Dendritic cell treated with granulocyte-macrophage colony-stimulating factor and Interleukin-4, amounts not matched to agents 40 ng/mL and 50 ng/mL, for 4 days (primary cell): ENCODE measurements at regions of chr16 and their contacts with region 1.

Region 1: DNA sequence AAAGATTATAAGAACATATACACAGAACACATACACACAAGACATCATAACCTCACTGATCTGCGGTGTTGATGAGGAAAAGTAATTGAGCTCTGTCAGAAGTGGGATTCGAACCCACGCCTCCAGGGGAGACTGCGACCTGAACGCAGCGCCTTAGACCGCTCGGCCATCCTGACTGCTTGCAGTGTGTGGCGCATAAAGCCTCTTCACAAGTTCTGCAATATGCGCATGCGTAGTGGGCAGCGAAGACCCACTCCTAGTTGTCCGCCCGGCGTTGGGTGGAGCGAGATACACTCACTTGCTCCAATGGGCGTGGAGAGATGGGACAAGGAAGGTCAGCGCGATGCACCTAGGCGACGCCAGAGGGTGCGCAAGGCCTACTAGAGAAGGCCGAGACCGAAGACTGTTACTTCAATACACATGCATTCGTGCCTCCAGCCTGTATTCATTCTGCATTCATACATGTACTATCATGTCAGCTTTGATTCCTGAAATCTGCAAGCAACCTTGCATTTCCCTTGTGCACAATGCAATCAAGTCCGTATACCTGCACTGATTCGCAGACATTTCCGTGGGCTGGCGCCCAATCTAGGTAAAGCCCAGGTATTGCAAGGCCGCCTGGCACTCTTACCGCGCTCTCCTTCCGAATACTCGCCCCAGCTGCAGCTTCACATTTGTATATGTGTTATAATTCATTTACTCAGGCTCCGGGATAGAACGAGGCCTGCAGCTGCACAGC is 16.1 kb upstream of the PLLP start:
- H3K4me3 Mint-ChIP-seq: peak overlapping the region; percentile 0
- H3K27ac Mint-ChIP-seq: no peak overlapping the region
- H3K4me1 Mint-ChIP-seq: peaks cover 14% of the 10 kb centered on the region
- H3K27me3 Mint-ChIP-seq: peaks cover 34% of the 10 kb centered on the region

Region 2: GRCh38 chr16:57244767-57245471 is 55.6 kb before region 1 on chr16 and contains the start of gene ARL2BP:
- intact Hi-C with region 1: loop called (anchors 5 kb)
- H3K4me3 Mint-ChIP-seq: peak within 1 kb of the TSS; percentile 81
- H3K27ac Mint-ChIP-seq: peak within 1 kb of the TSS; percentile 91
- H3K4me1 Mint-ChIP-seq: peaks cover 36% of the 10 kb centered on the region
- H3K27me3 Mint-ChIP-seq: no peaks in the 10 kb centered on the region

Region 3: GRCh38 chr16:57319646-57320045 is 19.1 kb after region 1 on chr16:
- intact Hi-C with region 1: loop called (anchors 1 kb)
- H3K4me3 Mint-ChIP-seq: no peak overlapping the region
- H3K27ac Mint-ChIP-seq: no peak overlapping the region
- H3K4me1 Mint-ChIP-seq: peaks cover 16% of the 10 kb centered on the region
- H3K27me3 Mint-ChIP-seq: peaks cover 26% of the 10 kb centered on the region

Region 4: DNA sequence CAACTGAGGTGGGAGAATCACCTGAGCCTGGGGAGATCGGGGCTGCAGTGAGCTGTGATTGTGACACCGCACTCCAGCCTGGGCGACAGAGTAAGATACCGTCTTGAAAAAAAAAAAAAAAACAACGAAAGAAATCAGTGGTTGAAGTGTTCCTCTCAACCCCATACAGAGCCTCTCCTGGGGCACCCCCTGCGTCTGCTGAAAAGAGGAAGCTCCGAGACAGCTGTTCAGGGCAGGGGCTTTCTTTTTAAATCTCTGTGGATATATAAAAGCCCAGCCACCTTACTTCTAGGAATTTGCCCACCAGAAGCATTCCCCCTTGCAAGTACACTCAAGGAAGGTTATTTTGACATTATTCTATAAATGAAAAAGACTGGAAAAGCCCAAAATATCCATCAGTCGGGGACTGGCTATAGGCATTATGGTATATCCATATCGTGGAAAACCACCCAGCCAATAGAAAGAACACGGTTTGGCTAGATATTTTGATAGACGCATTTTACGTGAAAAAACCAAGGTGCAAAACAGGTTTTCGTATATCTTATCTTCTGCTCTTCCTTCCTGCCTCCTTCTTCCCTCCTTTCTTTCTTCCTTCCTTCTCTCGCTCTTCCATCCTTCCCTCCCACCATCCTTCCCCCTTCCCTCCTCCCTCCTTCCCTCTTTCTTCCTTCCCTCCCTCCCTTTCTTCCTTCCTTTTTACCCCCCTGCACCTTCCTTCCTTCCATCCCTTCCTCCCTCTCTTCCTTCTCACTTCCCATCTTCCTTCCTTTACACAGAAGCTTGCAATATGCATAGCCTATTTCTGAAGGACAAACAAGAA is 48.9 kb after region 1 on chr16:
- intact Hi-C with region 1: loop called (anchors 5 kb)
- H3K4me3 Mint-ChIP-seq: peak overlapping the region; percentile 9
- H3K27ac Mint-ChIP-seq: peak overlapping the region; percentile 64
- H3K4me1 Mint-ChIP-seq: peaks cover 39% of the 10 kb centered on the region
- H3K27me3 Mint-ChIP-seq: peaks cover 27% of the 10 kb centered on the region

Region 5: GRCh38 chr16:57422026-57422944 is 121.7 kb after region 1 on chr16:
- intact Hi-C with region 1: loop called (anchors 1 kb)
- H3K4me3 Mint-ChIP-seq: no peak overlapping the region
- H3K27ac Mint-ChIP-seq: no peak overlapping the region
- H3K4me1 Mint-ChIP-seq: peaks cover 16% of the 10 kb centered on the region
- H3K27me3 Mint-ChIP-seq: peaks cover 8% of the 10 kb centered on the region

Region 6: GRCh38 chr16:57519796-57520360 is 219.3 kb after region 1 on chr16:
- intact Hi-C with region 1: loop called (anchors 5 kb)
- H3K4me3 Mint-ChIP-seq: no peak overlapping the region
- H3K27ac Mint-ChIP-seq: no peak overlapping the region
- H3K4me1 Mint-ChIP-seq: peaks cover 19% of the 10 kb centered on the region
- H3K27me3 Mint-ChIP-seq: peaks cover 79% of the 10 kb centered on the region